ENCODE measurements at regions of chr14 and their contacts with region 1.

Region 1: DNA sequence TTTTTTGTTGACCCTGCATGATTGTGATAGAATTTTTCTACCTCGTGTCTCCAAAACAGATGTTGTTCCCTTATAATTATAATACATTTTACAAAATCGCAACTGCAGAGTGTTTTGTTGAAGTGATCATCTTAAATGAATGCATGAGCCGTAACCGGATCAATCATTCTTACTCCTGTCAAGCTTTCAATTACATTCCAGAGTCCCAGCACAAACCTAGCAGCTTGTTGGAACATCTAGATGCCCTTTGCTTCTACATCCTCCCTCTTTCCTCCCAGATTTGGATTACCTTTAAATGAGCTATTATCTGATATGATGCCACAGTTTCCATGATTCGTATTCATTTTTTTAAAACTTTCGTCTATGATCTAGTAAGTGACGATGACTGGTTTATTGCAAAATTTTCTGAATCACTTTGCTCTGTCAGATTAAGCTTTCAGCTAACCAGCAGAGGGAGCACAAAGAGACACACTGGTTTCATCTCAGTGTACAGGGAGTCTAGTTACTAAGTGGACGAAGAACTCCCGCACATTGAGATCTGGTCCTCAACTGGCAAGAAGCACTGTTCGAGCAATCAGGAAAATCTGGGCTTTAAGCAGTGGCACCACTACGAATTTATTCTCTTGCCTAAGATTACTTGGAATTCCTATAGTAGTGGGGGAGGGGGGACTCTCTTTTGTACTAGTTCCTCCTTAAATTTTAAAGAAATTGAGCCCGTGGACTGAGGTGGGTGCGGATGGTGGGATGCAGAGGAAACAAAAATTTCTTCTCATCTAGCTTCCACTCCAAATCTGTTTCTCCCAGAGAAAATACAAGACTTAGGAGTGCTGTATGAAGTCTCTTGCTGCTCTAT is 40.9 kb downstream of the TSHR start:
- DNase-seq: peak; percentile 52
- ATAC-seq: peak; percentile 61
- H3K4me3 ChIP-seq: no peak overlapping the region
- H3K4me3 Mint-ChIP-seq: no peak overlapping the region
- H3K27ac ChIP-seq: no peak overlapping the region
- H3K27ac Mint-ChIP-seq: no peak overlapping the region
- H3K4me1 ChIP-seq: peaks cover 4 to 7% of the 10 kb centered on the region in 2 donors
- H3K4me1 Mint-ChIP-seq: peaks cover 4% of the 10 kb centered on the region
- H3K27me3 ChIP-seq: peaks cover 0 to 4% (median 1%) of the 10 kb centered on the region in 4 experiments
- H3K27me3 Mint-ChIP-seq: peaks cover 38% of the 10 kb centered on the region
- CTCF ChIP-seq: peak; percentile 61

Region 2: DNA sequence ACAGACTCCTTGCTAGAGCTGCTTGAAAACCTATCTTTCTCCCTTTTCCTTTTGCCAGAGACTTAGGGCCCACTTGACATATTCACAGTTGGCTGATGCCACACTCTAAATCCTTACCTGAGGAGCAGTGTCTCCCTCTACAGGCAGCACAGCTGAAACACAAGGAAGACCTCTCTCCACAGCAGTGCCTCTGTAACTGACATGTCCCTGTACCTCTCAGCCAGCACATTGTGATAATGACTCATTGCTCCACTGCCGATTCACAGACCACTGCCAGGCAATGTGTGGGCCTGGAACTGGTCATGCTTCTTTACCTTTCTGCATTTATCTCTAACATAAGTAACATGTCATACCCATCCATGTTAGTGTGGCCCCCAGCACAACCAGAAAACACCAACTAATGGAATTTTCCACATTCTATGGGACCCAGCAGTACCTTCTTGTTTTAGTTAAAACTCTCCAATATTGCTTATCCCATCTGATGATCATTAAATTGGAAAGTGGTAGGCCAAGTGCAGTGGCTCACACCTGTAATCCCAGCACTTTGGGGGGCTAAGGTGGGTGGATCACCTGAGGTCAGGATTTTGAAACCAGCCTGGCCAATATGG is 168.0 kb after region 1 on chr14:
- CTCF ChIA-PET with region 1: interaction called, 43 read pairs
- POLR2A ChIA-PET with region 1: no interaction called
- intact Hi-C with region 1: no loop called
- DNase-seq: peak; percentile 32
- ATAC-seq: peak; percentile 49
- H3K4me3 ChIP-seq: no peak overlapping the region
- H3K4me3 Mint-ChIP-seq: no peak overlapping the region
- H3K27ac ChIP-seq: no peak overlapping the region
- H3K27ac Mint-ChIP-seq: no peak overlapping the region
- H3K4me1 ChIP-seq: peaks cover 0 to under 1% of the 10 kb centered on the region in 2 donors
- H3K4me1 Mint-ChIP-seq: peaks cover 3% of the 10 kb centered on the region
- H3K27me3 ChIP-seq: no peaks in the 10 kb centered on the region
- H3K27me3 Mint-ChIP-seq: no peaks in the 10 kb centered on the region
- CTCF ChIP-seq: peak; percentile 31

Region 3: GRCh38 chr14:81170104-81170828 is 174.0 kb after region 1 on chr14:
- CTCF ChIA-PET with region 1: interaction called, 43 read pairs
- POLR2A ChIA-PET with region 1: no interaction called
- intact Hi-C with region 1: loop called (anchors 1 kb)
- DNase-seq: peak; percentile 91
- ATAC-seq: peak; percentile 97
- H3K4me3 ChIP-seq: peak overlapping the region; percentile 39 to 73 (median 63)
- H3K4me3 Mint-ChIP-seq: peak overlapping the region; percentile 94
- H3K27ac ChIP-seq: peak overlapping the region; percentile 71 to 73
- H3K27ac Mint-ChIP-seq: peak overlapping the region; percentile 97
- H3K4me1 ChIP-seq: peaks cover 16 to 21% of the 10 kb centered on the region in 2 donors
- H3K4me1 Mint-ChIP-seq: peaks cover 46% of the 10 kb centered on the region
- H3K27me3 ChIP-seq: no peaks in the 10 kb centered on the region
- H3K27me3 Mint-ChIP-seq: no peaks in the 10 kb centered on the region
- CTCF ChIP-seq: peak; percentile 92

Region 4: GRCh38 chr14:81211844-81212243 is 215.6 kb after region 1 on chr14:
- CTCF ChIA-PET with region 1: interaction called, 27 read pairs
- POLR2A ChIA-PET with region 1: no interaction called
- intact Hi-C with region 1: loop called (anchors 1 kb)
- DNase-seq: peak; percentile 64
- ATAC-seq: peak; percentile 75
- H3K4me3 ChIP-seq: no peak overlapping the region
- H3K4me3 Mint-ChIP-seq: no peak overlapping the region
- H3K27ac ChIP-seq: peak overlapping the region in 1 of 2 donors; percentile 3
- H3K27ac Mint-ChIP-seq: no peak overlapping the region
- H3K4me1 ChIP-seq: peaks cover 17 to 22% of the 10 kb centered on the region in 2 donors
- H3K4me1 Mint-ChIP-seq: peaks cover 52% of the 10 kb centered on the region
- H3K27me3 ChIP-seq: no peaks in the 10 kb centered on the region
- H3K27me3 Mint-ChIP-seq: no peaks in the 10 kb centered on the region
- CTCF ChIP-seq: peak; percentile 75

Region 5: DNA sequence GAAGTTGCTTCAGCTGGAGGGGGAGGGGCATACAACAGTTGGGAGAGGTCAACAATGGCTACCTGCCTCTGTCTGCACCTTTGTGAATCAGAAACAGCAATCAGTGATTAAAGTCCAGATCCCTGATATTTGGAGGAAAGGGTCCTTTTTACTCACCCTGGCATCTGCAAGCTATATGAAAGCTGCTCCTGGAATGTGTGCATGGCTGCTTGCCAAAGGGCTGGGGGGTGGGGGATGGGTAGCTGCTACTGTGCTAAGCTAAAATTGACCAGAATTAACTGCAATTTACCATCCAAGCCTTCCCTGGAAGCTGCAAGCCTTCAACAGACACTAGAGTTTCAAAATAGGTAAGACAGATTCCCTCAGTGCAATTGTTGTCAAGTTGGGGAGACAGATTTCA is 238.0 kb after region 1 on chr14:
- CTCF ChIA-PET with region 1: no interaction called
- POLR2A ChIA-PET with region 1: no interaction called
- intact Hi-C with region 1: no loop called
- DNase-seq: no peak
- ATAC-seq: no peak
- H3K4me3 ChIP-seq: no peak overlapping the region
- H3K4me3 Mint-ChIP-seq: no peak overlapping the region
- H3K27ac ChIP-seq: no peak overlapping the region
- H3K27ac Mint-ChIP-seq: no peak overlapping the region
- H3K4me1 ChIP-seq: no peaks in the 10 kb centered on the region
- H3K4me1 Mint-ChIP-seq: no peaks in the 10 kb centered on the region
- H3K27me3 ChIP-seq: no peaks in the 10 kb centered on the region
- H3K27me3 Mint-ChIP-seq: no peaks in the 10 kb centered on the region
- CTCF ChIP-seq: no peak

Region 6: DNA sequence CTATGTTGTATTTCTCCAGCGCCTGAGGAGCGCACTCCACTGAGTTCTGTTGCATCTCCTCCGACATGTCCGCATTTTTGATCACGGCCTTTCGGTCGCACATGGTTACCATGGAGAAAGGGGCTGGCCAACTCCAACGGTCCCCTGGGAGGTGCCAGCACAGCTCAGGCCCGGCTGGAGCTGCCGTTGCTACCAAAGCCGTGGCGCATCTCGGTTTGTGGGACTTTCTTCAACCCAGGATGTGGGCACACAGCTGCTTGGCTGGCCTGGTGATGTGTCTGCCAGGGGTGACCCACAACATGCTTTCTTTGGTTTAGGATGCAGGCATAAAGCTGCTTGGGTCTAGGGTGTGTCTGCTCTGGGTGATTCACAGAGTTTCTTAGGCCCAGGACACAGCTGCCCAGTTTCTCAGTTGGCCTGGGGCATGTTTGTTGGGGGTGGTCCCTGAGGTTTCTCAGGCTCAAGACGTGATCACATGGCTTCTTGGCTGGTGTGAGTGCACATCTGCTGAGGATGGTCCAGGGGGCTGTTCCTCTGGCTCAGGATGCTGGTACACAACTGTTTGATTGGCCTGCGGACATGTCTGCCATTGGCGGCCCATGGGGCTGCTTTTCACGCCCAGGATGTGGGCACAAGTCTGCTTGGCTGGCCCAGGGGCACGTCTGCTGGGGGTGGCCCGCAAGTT is 250.3 kb after region 1 on chr14:
- CTCF ChIA-PET with region 1: no interaction called
- POLR2A ChIA-PET with region 1: no interaction called
- intact Hi-C with region 1: no loop called
- DNase-seq: no peak
- ATAC-seq: no peak
- H3K4me3 ChIP-seq: no peak overlapping the region
- H3K4me3 Mint-ChIP-seq: no peak overlapping the region
- H3K27ac ChIP-seq: no peak overlapping the region
- H3K27ac Mint-ChIP-seq: no peak overlapping the region
- H3K4me1 ChIP-seq: no peaks in the 10 kb centered on the region
- H3K4me1 Mint-ChIP-seq: no peaks in the 10 kb centered on the region
- H3K27me3 ChIP-seq: no peaks in the 10 kb centered on the region
- H3K27me3 Mint-ChIP-seq: peaks cover 13% of the 10 kb centered on the region
- CTCF ChIP-seq: no peak

Measured in B cell (primary cell).